H1 (cell line): ENCODE measurements at regions of chr12 and their contacts with region 1.

Region 1: GRCh38 chr12:109858764-109859163 is 21.6 kb downstream of the GLTP start:
- DNase-seq: no peak
- H3K4me3 ChIP-seq: no peak overlapping the region
- H3K27ac ChIP-seq: no peak overlapping the region
- H3K4me1 ChIP-seq: no peaks in the 10 kb centered on the region
- H3K27me3 ChIP-seq: no peaks in the 10 kb centered on the region
- CTCF ChIP-seq: no peak
- EP300 ChIP-seq: no peak
- POLR2A ChIP-seq: no peak
- RAD21 ChIP-seq: no peak

Region 2: DNA sequence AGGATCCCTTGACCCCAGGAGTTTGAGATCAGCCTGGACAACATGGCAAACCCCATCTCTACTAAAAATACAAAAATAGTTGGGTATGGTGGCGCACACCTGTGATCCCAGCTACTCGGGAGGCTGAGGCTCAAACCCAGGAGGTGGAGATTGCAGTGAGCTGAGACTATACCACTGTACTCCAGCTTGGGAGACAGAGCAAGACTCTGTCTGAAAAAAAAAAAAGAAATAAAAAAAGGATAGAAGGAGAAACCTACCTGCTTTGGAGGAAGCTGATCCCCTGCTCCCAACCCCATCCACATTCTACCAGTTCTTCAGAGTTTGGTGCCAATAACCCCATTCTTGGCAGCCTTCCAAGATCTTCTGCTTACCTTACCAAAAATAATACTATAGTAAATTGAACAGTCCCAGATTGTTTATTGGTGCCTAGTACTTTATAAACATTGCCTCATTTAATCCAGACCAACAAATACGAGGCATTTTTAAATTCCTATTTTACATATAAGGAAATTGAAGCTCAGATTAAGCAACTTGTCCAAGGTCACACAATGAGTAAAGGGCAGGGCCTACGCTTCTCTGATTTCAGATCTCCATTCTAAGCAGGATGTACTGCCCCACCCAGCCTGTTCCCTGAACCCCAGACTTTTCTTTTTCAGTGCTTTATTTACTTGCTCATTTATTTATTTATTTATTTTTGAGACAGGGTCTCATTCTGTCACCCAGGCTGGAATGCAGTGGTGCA is 178.3 kb before region 1 on chr12:
- CTCF ChIA-PET with region 1: no interaction called
- POLR2A ChIA-PET with region 1: no interaction called
- DNase-seq: no peak
- H3K4me3 ChIP-seq: no peak overlapping the region
- H3K27ac ChIP-seq: no peak overlapping the region
- H3K4me1 ChIP-seq: peaks cover 0 to 8% (median 4%) of the 10 kb centered on the region in 4 experiments; a peak in 4 of 7 replicates
- H3K27me3 ChIP-seq: peaks cover 0 to 7% (median under 1%) of the 10 kb centered on the region in 4 experiments; a peak in 4 of 7 replicates
- CTCF ChIP-seq: no peak
- EP300 ChIP-seq: no peak
- POLR2A ChIP-seq: no peak
- RAD21 ChIP-seq: no peak

Region 3: GRCh38 chr12:109736552-109737108 is 122.1 kb before region 1 on chr12:
- CTCF ChIA-PET with region 1: no interaction called
- POLR2A ChIA-PET with region 1: no interaction called
- DNase-seq: peak in 1 of 2 experiments; percentile 87
- H3K4me3 ChIP-seq: no peak overlapping the region
- H3K27ac ChIP-seq: no peak overlapping the region
- H3K4me1 ChIP-seq: peaks cover 5 to 11% (median 7%) of the 10 kb centered on the region in 4 experiments; a peak in 6 of 7 replicates
- H3K27me3 ChIP-seq: peaks cover 0 to 16% (median 9%) of the 10 kb centered on the region in 4 experiments; a peak in 4 of 7 replicates
- CTCF ChIP-seq: no peak
- EP300 ChIP-seq: no peak
- POLR2A ChIP-seq: no peak
- RAD21 ChIP-seq: 0 out of 4 replicates have a peak, but pooled peaks of 1 of the 2 experiments have one; percentile 6

Region 4: DNA sequence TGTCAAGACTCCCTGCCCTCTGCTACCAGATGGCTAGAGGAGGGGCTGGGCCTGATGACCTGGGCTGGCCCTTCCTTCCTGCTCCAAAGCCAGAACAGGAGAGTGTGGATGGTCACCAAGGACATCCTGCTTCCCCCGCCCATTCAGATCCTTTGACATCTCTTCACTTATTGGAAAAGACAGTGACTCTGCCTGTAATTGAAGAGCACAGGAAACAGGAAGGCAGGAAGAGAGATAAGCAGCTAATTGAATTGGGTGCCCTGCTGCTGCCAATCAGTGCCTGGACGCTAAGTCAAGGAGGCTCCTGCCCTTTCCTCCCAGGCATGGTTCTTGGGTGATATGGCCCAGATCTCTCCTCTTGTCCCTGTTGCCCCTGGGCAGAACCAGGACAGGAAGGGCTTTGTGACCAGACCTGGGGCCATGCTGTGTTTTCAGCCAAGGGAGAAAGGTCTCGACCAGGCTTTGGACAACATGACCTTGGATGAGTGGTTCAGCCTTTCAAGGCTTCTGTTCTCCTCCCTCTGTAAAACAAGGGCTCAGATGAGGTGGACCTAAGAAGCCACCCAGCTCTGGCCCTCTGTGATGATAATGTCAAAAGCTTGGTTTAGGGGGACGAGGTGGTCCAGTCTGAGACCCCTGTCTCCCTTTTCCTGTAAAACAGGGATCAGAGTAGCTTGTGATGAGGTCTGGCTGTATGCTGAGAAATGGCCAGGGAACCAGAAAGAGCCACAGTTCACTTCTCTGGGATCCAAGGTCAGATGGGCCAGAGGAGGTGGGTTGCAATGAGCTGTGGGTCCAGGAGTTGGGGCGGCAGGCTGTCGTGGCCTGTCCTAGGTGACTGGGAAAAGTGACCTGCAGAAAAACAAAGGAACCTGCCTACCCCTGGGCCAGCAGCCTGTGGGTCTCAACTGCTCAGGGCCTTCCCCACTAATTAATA is 106.4 kb before region 1 on chr12:
- CTCF ChIA-PET with region 1: interaction called, 10 read pairs
- POLR2A ChIA-PET with region 1: no interaction called
- DNase-seq: no peak
- H3K4me3 ChIP-seq: no peak overlapping the region
- H3K27ac ChIP-seq: no peak overlapping the region
- H3K4me1 ChIP-seq: no peaks in the 10 kb centered on the region; a peak in 1 of 7 replicates
- H3K27me3 ChIP-seq: no peaks in the 10 kb centered on the region
- CTCF ChIP-seq: no peak
- EP300 ChIP-seq: no peak
- POLR2A ChIP-seq: no peak
- RAD21 ChIP-seq: no peak

Region 5: GRCh38 chr12:109814600-109815150 is 44.1 kb before region 1 on chr12:
- CTCF ChIA-PET with region 1: no interaction called
- POLR2A ChIA-PET with region 1: no interaction called
- DNase-seq: no peak
- H3K4me3 ChIP-seq: no peak overlapping the region
- H3K27ac ChIP-seq: no peak overlapping the region
- H3K4me1 ChIP-seq: no peaks in the 10 kb centered on the region; a peak in 1 of 7 replicates
- H3K27me3 ChIP-seq: no peaks in the 10 kb centered on the region
- CTCF ChIP-seq: no peak
- EP300 ChIP-seq: no peak
- POLR2A ChIP-seq: no peak
- RAD21 ChIP-seq: no peak

Region 6: DNA sequence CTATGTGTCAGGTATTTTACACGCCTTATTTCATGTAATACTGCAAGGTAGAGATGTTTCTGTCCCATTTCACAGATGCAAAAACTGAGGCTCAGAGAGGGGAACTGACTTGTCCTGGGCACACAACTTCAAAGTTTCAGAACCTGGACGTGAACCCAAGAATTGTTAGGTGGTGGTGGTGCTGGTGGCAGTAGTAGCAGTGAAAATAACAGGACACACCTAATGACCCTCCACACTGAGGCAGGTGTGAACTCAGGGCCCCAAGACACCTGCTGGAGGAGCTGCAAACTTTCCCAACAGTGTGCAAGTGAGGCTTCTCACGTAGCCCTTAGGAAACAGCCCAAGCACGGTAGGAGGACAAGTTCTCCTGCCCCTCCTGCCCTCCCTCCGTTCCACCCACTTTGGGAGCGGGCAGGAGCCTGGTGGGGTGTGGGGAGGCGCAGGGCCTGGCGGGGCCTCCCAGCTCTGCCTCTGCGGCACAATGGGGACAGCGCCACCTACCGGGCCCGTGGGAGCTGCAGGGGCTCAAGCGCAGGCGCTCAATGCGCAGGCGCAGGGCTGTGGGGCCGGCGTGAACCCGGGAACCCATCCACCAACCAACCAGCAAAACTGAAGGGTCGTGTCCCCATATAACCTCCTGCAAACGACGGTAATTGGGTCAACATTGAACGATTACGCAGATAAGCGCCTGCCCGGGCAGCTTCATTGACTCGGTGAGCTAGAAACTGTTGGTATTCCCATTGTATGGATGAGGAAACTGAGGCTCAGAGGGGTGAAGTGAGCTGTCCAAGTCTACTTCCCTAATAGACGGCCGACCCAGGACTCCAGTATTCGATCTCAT is 13.6 kb before region 1 on chr12:
- CTCF ChIA-PET with region 1: interaction called, 86 read pairs
- POLR2A ChIA-PET with region 1: interaction called, 4 read pairs
- DNase-seq: peak; percentile 69 to 99
- H3K4me3 ChIP-seq: peak overlapping the region in 1 of 4 experiments; percentile 43; a peak in 2 of 8 replicates
- H3K27ac ChIP-seq: no peak overlapping the region
- H3K4me1 ChIP-seq: peaks cover 0 to 4% (median 2%) of the 10 kb centered on the region in 4 experiments; a peak in 5 of 7 replicates
- H3K27me3 ChIP-seq: no peaks in the 10 kb centered on the region
- CTCF ChIP-seq: peak; percentile 95 to 96 (median 95)
- EP300 ChIP-seq: no peak; a peak in 1 of 3 replicates
- POLR2A ChIP-seq: no peak
- RAD21 ChIP-seq: peak; percentile 74 to 83

Region 7: GRCh38 chr12:109899783-109900751 is 41.3 kb after region 1 on chr12 and contains the start of gene TCHP:
- CTCF ChIA-PET with region 1: interaction called, 39 read pairs
- POLR2A ChIA-PET with region 1: interaction called, 3 read pairs
- DNase-seq: peak; percentile 34 to 76
- H3K4me3 ChIP-seq: peak within 1 kb of the TSS; percentile 45 to 75 (median 66)
- H3K27ac ChIP-seq: no peak within 1 kb of the TSS
- H3K4me1 ChIP-seq: peaks cover 0 to 10% (median 2%) of the 10 kb centered on the region in 4 experiments; a peak in 3 of 7 replicates
- H3K27me3 ChIP-seq: peaks cover 49 to 91% (median 87%) of the 10 kb centered on the region in 4 experiments
- CTCF ChIP-seq: no peak
- EP300 ChIP-seq: no peak
- POLR2A ChIP-seq: no peak
- RAD21 ChIP-seq: no peak
- total RNA-seq, gene TCHP: 4.5 TPM in 2 replicates

Region 8: GRCh38 chr12:109920261-109920780 is 61.6 kb after region 1 on chr12:
- CTCF ChIA-PET with region 1: interaction called, 77 read pairs
- POLR2A ChIA-PET with region 1: interaction called, 3 read pairs
- DNase-seq: no peak
- H3K4me3 ChIP-seq: no peak overlapping the region
- H3K27ac ChIP-seq: no peak overlapping the region
- H3K4me1 ChIP-seq: peaks cover 0 to 3% (median 0%) of the 10 kb centered on the region in 4 experiments; a peak in 1 of 7 replicates
- H3K27me3 ChIP-seq: no peaks in the 10 kb centered on the region
- CTCF ChIP-seq: no peak
- EP300 ChIP-seq: no peak
- POLR2A ChIP-seq: no peak
- RAD21 ChIP-seq: no peak

Region 9: GRCh38 chr12:110117956-110118685 is 259.4 kb after region 1 on chr12:
- CTCF ChIA-PET with region 1: no interaction called
- POLR2A ChIA-PET with region 1: no interaction called
- DNase-seq: no peak
- H3K4me3 ChIP-seq: no peak overlapping the region
- H3K27ac ChIP-seq: no peak overlapping the region
- H3K4me1 ChIP-seq: peaks cover 0 to 7% (median 5%) of the 10 kb centered on the region in 4 experiments; a peak in 6 of 7 replicates
- H3K27me3 ChIP-seq: peaks cover 0 to 2% (median 0%) of the 10 kb centered on the region in 4 experiments; a peak in 3 of 7 replicates
- CTCF ChIP-seq: no peak
- EP300 ChIP-seq: no peak
- POLR2A ChIP-seq: no peak
- RAD21 ChIP-seq: no peak